WTC11 (cell line): ENCODE measurements at regions of chr13 and their contacts with region 1.

Region 1: DNA sequence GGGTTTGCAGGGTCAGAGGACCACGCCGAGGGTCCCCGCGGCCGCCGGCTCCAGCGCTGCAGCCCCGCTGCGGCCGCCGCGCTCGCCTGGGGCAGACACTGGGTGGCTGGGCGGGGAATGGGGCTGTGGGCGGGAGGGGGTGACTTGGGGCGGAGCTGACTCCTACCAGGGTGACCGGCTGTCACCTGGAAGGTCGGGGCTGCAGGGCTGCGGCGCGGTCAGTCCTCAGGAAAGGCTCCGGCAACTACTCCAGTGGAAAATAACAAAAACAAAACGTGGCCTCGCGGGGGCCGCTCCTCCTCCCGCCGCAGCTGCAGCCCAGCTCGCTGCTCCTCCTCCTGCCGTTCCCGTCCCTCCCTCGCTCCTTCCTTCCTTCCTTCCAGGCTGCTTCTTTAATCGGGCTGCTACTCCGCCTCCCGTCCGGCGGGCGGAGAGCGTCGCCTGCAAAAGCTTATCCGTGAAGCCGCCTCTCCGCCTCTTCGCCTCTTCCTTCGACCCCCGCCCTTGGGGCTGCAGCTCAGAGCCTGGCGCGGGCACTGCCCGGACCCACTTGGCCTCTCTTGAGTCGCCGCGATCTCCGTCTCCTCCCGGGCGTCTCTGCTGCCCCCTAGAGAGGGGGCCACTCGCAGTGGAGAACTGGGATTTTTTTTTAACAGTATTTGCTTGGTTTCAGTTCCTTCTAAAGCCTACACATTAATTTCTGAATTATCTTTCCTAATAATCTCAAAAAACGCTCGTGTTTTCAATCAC is at the start of gene TBC1D4:
- DNase-seq: peak; percentile 93
- ATAC-seq: peak; percentile 82
- H3K4me3 Mint-ChIP-seq: peak within 1 kb of the TSS; percentile 90
- H3K27ac Mint-ChIP-seq: peak within 1 kb of the TSS; percentile 86
- H3K4me1 Mint-ChIP-seq: peaks cover 49% of the 10 kb centered on the region
- H3K27me3 Mint-ChIP-seq: no peaks in the 10 kb centered on the region
- CTCF ChIP-seq: peak; percentile 32
- total RNA-seq, gene TBC1D4: 30.1 to 37.1 TPM (median 30.4 TPM) in 3 replicates

Region 2: DNA sequence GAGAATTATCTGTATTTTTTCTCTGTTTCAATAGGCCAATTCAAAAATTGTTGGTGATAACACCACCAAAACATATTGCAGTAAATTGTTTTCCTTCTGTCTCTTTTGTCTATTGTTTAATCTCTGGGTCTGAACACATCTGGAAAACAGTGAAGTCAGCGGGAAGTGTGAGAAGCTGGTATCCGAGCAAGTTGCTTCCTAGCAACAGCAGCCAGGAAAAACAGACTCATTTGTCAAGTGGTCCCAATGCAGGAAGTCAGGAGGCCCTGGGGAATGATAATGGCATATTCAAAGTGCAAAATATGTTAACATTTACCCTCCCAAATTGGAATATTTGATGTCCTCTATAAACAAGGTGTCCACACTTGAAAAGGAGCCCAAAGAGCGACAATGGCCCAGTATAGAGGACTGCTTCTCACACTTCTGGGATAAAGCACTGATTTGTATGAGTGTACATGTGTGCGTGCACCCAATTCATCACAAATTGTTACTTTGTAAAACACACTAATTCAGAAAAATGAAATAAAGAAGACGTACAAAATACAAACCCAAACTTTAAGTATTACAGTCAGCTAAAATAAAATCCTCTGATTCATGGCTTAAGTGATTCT is 515.3 kb before region 1 on chr13:
- CTCF ChIA-PET with region 1: no interaction called
- POLR2A ChIA-PET with region 1: no interaction called
- DNase-seq: no peak
- ATAC-seq: no peak; the same call in 1 of the 2 replicates
- H3K4me3 Mint-ChIP-seq: no peak overlapping the region
- H3K27ac Mint-ChIP-seq: no peak overlapping the region
- H3K4me1 Mint-ChIP-seq: no peaks in the 10 kb centered on the region
- H3K27me3 Mint-ChIP-seq: no peaks in the 10 kb centered on the region
- CTCF ChIP-seq: no peak

Region 3: GRCh38 chr13:75299913-75300862 is 182.1 kb before region 1 on chr13:
- CTCF ChIA-PET with region 1: no interaction called
- POLR2A ChIA-PET with region 1: no interaction called
- DNase-seq: no peak
- ATAC-seq: no peak
- H3K4me3 Mint-ChIP-seq: no peak overlapping the region
- H3K27ac Mint-ChIP-seq: no peak overlapping the region
- H3K4me1 Mint-ChIP-seq: no peaks in the 10 kb centered on the region
- H3K27me3 Mint-ChIP-seq: no peaks in the 10 kb centered on the region
- CTCF ChIP-seq: no peak

Region 4: GRCh38 chr13:75357576-75358289 is 124.5 kb before region 1 on chr13:
- CTCF ChIA-PET with region 1: interaction called, 16 read pairs
- POLR2A ChIA-PET with region 1: no interaction called
- DNase-seq: peak; percentile 57
- ATAC-seq: peak; percentile 93
- H3K4me3 Mint-ChIP-seq: no peak overlapping the region
- H3K27ac Mint-ChIP-seq: peak overlapping the region; percentile 67; the same call in 1 of the 2 replicates
- H3K4me1 Mint-ChIP-seq: peaks cover 17% of the 10 kb centered on the region
- H3K27me3 Mint-ChIP-seq: no peaks in the 10 kb centered on the region
- CTCF ChIP-seq: peak; percentile 56

Region 5: GRCh38 chr13:75372517-75372916 is 109.7 kb before region 1 on chr13:
- CTCF ChIA-PET with region 1: interaction called, 23 read pairs
- POLR2A ChIA-PET with region 1: interaction called, 3 read pairs
- DNase-seq: no peak
- ATAC-seq: peak; percentile 83
- H3K4me3 Mint-ChIP-seq: no peak overlapping the region
- H3K27ac Mint-ChIP-seq: no peak overlapping the region
- H3K4me1 Mint-ChIP-seq: peaks cover 43% of the 10 kb centered on the region
- H3K27me3 Mint-ChIP-seq: no peaks in the 10 kb centered on the region
- CTCF ChIP-seq: peak; percentile 63; the same call in 1 of the 2 replicates

Region 6: GRCh38 chr13:75458696-75459422 is 23.4 kb before region 1 on chr13:
- CTCF ChIA-PET with region 1: interaction called, 11 read pairs
- POLR2A ChIA-PET with region 1: interaction called, 4 read pairs
- DNase-seq: peak; percentile 21
- ATAC-seq: peak; percentile 88
- H3K4me3 Mint-ChIP-seq: peak overlapping the region; percentile 31
- H3K27ac Mint-ChIP-seq: peak overlapping the region; percentile 97
- H3K4me1 Mint-ChIP-seq: peaks cover 56% of the 10 kb centered on the region
- H3K27me3 Mint-ChIP-seq: no peaks in the 10 kb centered on the region
- CTCF ChIP-seq: no peak

Region 7: DNA sequence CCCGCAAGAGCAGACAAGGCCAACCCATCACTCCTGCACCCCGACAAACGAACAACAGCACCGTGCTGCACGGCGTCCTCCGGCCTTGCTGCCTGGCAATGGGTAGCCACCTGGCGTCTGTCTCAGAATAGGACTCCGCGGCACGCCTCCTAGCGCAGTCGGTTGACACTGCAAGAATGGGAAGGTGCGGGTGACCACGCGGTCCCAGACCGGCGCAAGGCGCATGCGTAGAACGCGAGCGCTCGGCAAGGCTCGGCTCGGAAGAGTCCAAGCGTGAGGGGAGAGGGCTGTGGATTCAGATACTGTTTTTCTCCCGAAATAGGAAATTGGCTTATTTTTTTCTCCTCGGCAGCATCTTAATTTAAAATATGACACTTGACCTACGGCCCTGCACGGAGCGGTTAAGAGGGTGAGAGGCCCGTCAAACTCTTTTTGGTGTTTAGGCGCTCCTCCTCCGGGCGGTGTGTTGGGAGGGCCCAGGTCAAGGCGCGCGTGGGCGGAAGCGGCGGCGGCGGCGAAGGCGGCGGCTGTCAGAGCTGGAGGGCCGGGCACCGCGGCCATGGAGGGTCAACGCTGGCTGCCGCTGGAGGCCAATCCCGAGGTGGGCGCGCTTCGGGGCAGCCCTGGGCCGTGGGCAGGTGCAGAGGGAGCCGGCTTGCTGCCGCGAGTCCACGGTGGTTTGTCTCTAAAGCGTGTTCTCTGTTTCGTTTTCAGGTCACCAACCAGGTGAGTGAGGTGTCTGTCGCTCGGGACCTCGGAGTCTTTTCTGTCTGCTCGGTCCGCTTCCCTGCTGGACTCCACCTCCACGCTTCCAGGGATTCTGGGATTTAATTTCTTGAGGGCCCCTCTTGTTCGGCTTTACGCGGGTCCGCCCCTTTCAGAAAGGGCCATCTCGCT is 67.3 kb after region 1 on chr13 and contains the start of gene UCHL3:
- CTCF ChIA-PET with region 1: interaction called, 15 read pairs
- POLR2A ChIA-PET with region 1: interaction called, 3 read pairs
- DNase-seq: peak; percentile 98
- ATAC-seq: peak; percentile 95
- H3K4me3 Mint-ChIP-seq: peak within 1 kb of the TSS; percentile 96
- H3K27ac Mint-ChIP-seq: peak within 1 kb of the TSS; percentile 93
- H3K4me1 Mint-ChIP-seq: peaks cover 24% of the 10 kb centered on the region
- H3K27me3 Mint-ChIP-seq: no peaks in the 10 kb centered on the region
- CTCF ChIP-seq: peak; percentile 69
- total RNA-seq, gene UCHL3: 41.6 to 46.9 TPM (median 43.1 TPM) in 3 replicates